Activated naive CD4-positive, alpha-beta T cell treated with anti-CD3 and anti-CD28 coated beads for 36 hours (primary cell): ENCODE measurements at regions of chr4 and their contacts with region 1.

Region 1: GRCh38 chr4:10192331-10192730 is 75.7 kb upstream of the WDR1 start:
- DNase-seq: no peak
- H3K4me3 Mint-ChIP-seq: no peak overlapping the region
- H3K27ac Mint-ChIP-seq: no peak overlapping the region
- H3K4me1 Mint-ChIP-seq: no peaks in the 10 kb centered on the region
- H3K27me3 Mint-ChIP-seq: no peaks in the 10 kb centered on the region

Region 2: GRCh38 chr4:10239982-10240654 is 47.8 kb after region 1 on chr4:
- CTCF ChIA-PET with region 1: interaction called, 5 read pairs
- intact Hi-C with region 1: loop called (anchors 5 kb)
- DNase-seq: no peak
- H3K4me3 Mint-ChIP-seq: no peak overlapping the region
- H3K27ac Mint-ChIP-seq: no peak overlapping the region
- H3K4me1 Mint-ChIP-seq: no peaks in the 10 kb centered on the region
- H3K27me3 Mint-ChIP-seq: no peaks in the 10 kb centered on the region